MCF 10A (cell line): ENCODE measurements at regions of chrX and their contacts with region 1.

Region 1: GRCh38 chrX:20521245-20521644 is 254.5 kb upstream of the RPS6KA3 start:
- DNase-seq: peak; percentile 79
- H3K4me3 Mint-ChIP-seq: no peak overlapping the region
- H3K27ac Mint-ChIP-seq: no peak overlapping the region
- H3K4me1 Mint-ChIP-seq: no peaks in the 10 kb centered on the region
- H3K27me3 Mint-ChIP-seq: peaks cover 49% of the 10 kb centered on the region
- CTCF ChIP-seq: no peak

Region 2: DNA sequence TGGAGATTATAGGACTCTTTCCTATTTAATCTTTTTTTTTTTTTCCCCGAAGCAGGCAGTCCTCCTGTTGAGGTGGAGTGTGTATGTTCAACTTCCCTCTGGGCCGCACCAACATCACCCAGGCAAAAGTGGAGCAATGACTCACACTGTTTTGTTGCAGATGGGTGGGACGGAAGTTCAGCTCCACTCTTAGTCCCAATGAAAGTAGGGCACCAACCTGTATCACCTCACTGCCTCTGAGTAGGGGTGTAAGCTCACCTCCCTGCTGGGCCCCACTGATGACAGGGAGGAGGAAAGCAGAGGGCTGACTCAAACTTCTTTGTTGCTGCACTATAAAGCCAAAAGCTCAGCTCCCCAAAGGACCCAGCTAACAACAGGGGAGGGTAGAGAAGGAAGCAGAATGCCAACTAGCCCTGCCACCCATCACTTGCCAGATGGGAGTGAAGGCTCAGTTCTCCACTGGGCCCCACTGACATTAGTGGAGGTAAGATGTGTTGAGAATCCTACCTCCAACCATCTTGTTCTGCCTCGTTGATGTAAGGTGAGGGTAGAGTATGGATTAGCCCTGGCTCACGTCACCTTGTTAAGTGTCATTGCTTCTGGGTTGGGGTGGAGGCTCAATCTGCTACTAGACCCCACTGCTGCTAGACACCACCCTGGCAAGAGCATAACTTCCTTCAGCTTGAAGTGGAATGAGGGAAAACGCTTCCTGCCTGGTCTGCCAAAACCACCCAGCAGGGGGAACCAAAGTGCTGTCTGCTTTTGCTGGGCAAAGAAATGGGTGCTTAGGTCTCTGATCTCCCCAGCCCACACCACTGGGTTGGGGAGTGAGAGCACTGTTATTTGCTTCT is 268.6 kb before region 1 on chrX:
- CTCF ChIA-PET with region 1: no interaction called
- POLR2A ChIA-PET with region 1: no interaction called
- intact Hi-C with region 1: loop called (anchors 5 kb)
- DNase-seq: peak; percentile 73
- H3K4me3 Mint-ChIP-seq: no peak overlapping the region
- H3K27ac Mint-ChIP-seq: no peak overlapping the region
- H3K4me1 Mint-ChIP-seq: no peaks in the 10 kb centered on the region
- H3K27me3 Mint-ChIP-seq: peaks cover 42% of the 10 kb centered on the region
- CTCF ChIP-seq: peak; percentile 73

Region 3: DNA sequence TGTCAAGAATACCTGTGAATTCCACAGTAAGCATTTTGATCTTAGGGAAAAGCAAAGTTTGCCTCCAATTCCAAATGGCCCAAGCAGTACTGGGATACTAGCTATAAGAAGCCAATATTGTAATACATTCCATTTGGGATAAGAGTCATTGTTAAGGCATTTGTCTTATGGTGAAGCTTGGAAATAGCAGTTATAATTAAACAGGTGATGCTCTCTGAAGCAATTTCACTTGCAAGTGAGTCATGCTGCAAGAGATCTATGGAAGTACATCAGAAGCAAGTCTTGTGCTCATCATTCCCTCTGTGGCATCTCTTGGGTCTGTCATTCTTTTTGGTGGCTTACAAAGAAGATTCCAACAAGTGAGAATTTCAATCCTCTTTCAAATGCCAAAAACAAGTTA is 131.8 kb after region 1 on chrX:
- CTCF ChIA-PET with region 1: no interaction called
- POLR2A ChIA-PET with region 1: no interaction called
- intact Hi-C with region 1: no loop called
- DNase-seq: no peak
- H3K4me3 Mint-ChIP-seq: no peak overlapping the region
- H3K27ac Mint-ChIP-seq: no peak overlapping the region
- H3K4me1 Mint-ChIP-seq: no peaks in the 10 kb centered on the region
- H3K27me3 Mint-ChIP-seq: no peaks in the 10 kb centered on the region
- CTCF ChIP-seq: no peak